ENCODE measurements at regions of chr18 and their contacts with region 1.

Region 1: DNA sequence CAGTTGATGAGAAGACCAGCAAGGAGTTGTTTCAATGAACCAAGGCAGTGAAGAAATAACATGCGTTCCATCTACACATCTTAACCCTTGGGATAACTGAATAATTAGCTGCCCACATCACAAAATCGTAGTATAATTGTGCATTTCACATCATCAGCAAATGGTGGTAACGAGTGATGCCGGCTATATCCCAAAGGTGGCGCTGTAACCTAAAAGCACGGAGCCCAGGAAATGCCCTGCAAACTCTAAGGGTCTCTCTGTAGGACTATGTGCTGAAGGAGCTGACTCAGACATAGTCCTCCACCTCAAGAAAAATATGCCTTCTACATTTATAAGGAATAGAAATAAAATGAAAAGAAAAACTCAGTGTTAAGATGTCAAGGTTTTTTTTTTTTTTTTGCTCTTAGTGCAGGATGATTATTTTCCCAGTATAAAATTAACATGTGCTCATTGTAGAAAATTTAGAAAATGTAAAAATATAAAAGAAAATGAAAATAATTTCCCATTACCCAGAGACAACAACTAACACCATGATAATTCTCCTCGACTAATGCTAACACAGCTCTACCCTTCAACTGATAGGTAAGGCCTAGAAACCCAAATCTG is 23.1 kb upstream of the DSG3 start:
- DNase-seq: peak; percentile 10
- ATAC-seq: peak; percentile 76; the same call in 2 of the 3 replicates
- H3K4me3 ChIP-seq: no peak overlapping the region
- H3K27ac ChIP-seq: no peak overlapping the region
- H3K4me1 ChIP-seq: peaks cover 8% of the 10 kb centered on the region; the same call in 1 of the 2 replicates
- H3K27me3 ChIP-seq: no peaks in the 10 kb centered on the region
- CTCF ChIP-seq: peak; percentile 81
- EP300 ChIP-seq: no peak
- POLR2A ChIP-seq: no peak
- RAD21 ChIP-seq: peak; percentile 52

Region 2: DNA sequence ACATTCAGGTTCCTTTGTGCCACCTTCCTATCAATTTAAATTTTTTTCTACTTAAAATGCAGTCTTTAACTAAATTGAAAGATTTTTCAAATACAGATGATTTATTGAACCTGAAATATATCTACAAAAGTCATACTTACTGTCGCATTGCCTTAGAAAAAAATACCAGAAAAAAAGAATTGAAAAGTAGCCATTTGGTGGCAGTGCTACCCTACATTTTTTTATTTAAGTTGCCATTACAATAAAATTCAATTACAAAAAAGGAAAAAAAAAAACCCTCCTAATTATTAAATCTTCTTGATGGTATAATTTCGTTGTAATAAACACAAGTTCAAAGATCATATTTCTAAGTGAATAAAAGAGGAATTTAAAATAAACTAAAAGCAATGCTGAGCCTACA is 425.3 kb before region 1 on chr18:
- CTCF ChIA-PET with region 1: no interaction called
- POLR2A ChIA-PET with region 1: no interaction called
- in situ Hi-C with region 1: no loop called
- intact Hi-C with region 1: loop called (anchors 10 kb)
- DNase-seq: no peak
- ATAC-seq: no peak
- H3K4me3 ChIP-seq: no peak overlapping the region
- H3K27ac ChIP-seq: no peak overlapping the region
- H3K4me1 ChIP-seq: no peaks in the 10 kb centered on the region
- H3K27me3 ChIP-seq: no peaks in the 10 kb centered on the region
- CTCF ChIP-seq: 0 out of 2 replicates have a peak, but pooled peaks have one; percentile 12
- EP300 ChIP-seq: no peak
- POLR2A ChIP-seq: no peak
- RAD21 ChIP-seq: no peak

Region 3: DNA sequence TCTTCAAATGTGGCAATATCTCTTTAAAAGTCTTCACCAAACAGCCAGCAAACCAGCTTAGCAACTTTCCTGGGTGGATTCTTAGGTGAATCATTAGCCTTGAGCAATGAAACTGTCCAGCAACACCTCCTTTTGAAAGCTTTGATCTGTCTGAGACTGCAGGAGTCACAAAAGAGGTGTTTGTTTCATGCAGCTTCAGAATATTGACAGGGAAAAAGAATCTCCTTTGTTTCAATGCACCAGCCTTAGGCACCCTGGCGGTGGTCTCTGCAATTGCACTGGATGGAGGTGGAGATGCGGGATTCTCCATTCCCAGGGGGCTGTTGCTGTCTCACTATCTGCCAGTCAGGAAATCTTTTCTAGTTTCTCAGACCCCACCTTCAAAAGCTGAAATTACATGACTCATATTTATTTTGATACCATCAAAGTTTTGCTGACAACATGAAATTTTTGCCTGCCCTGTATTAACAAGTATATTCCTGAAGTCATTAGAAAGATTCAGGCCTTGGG is 182.5 kb before region 1 on chr18:
- CTCF ChIA-PET with region 1: no interaction called
- POLR2A ChIA-PET with region 1: no interaction called
- in situ Hi-C with region 1: no loop called
- intact Hi-C with region 1: no loop called
- DNase-seq: peak; percentile 98
- ATAC-seq: peak; percentile 86
- H3K4me3 ChIP-seq: no peak overlapping the region
- H3K27ac ChIP-seq: peak overlapping the region; percentile 94
- H3K4me1 ChIP-seq: peaks cover 61% of the 10 kb centered on the region
- H3K27me3 ChIP-seq: no peaks in the 10 kb centered on the region
- CTCF ChIP-seq: peak; percentile 82
- EP300 ChIP-seq: peak; percentile 29 to 94; a peak in 2 of 4 replicates
- POLR2A ChIP-seq: no peak
- RAD21 ChIP-seq: peak; percentile 80

Region 4: DNA sequence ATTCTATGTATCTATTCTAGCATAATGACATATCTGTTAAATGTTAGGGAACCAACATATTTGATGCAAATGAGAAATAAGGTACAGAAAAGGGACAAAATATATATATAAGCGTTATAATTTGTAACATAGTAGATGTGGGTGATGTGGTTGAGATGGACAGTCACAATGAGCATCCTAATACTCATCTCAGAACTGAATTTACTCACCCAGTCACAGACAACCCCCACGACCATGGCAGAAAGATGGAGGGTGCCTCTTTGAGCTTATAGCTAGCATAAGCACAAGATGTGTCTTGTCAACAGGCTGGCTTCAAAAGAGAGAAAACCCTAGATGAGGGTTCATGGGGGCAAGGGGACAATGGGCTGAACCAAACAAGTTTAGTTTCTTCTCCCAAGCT is 13.9 kb after region 1 on chr18:
- CTCF ChIA-PET with region 1: no interaction called
- POLR2A ChIA-PET with region 1: no interaction called
- in situ Hi-C with region 1: no loop called
- intact Hi-C with region 1: no loop called
- DNase-seq: no peak
- ATAC-seq: no peak
- H3K4me3 ChIP-seq: no peak overlapping the region
- H3K27ac ChIP-seq: no peak overlapping the region
- H3K4me1 ChIP-seq: no peaks in the 10 kb centered on the region
- H3K27me3 ChIP-seq: peaks cover 0 to 9% of the 10 kb centered on the region in 2 experiments; a peak in 3 of 5 replicates
- CTCF ChIP-seq: no peak
- EP300 ChIP-seq: no peak
- POLR2A ChIP-seq: no peak
- RAD21 ChIP-seq: no peak

Region 5: GRCh38 chr18:31490387-31490786 is 65.9 kb after region 1 on chr18:
- CTCF ChIA-PET with region 1: no interaction called
- POLR2A ChIA-PET with region 1: no interaction called
- in situ Hi-C with region 1: no loop called
- intact Hi-C with region 1: no loop called
- DNase-seq: no peak
- ATAC-seq: no peak
- H3K4me3 ChIP-seq: no peak overlapping the region
- H3K27ac ChIP-seq: no peak overlapping the region
- H3K4me1 ChIP-seq: no peaks in the 10 kb centered on the region
- H3K27me3 ChIP-seq: peaks cover 0 to 17% of the 10 kb centered on the region in 2 experiments; a peak in 2 of 5 replicates
- CTCF ChIP-seq: no peak
- EP300 ChIP-seq: no peak
- POLR2A ChIP-seq: no peak
- RAD21 ChIP-seq: no peak

Region 6: DNA sequence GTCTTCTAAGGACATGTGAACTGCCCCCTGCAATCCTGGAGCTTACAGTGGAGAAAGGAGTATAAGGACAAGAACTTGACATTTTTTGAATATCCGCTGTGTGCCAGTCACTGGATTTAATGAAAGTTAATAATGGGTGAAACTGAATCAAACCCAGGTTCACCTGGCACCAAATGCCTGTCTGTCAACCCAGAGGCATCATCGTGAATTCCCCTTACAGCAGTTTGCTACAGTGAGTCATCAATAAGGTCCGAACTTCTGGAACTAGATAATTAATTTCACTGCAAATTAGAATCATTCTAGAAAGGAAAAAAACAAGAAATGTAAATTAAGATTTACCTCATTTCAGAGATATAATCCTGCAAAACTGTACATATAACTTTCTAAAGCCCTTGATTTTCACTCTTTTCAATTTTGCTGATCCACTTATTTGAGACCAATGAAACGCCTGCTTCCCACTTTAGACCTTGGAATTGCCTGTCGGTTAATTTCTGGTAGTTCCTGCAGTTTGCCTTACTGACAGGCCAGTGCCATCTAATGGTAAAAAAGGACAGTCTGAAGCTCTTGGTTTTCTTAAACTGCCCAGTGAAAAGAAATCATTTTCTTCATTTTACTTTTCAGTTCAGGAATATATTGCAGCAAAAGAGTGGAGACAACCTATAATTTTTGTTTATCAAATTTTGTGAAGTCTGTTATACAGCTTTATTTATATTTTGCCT is 81.7 kb after region 1 on chr18:
- CTCF ChIA-PET with region 1: no interaction called
- POLR2A ChIA-PET with region 1: no interaction called
- in situ Hi-C with region 1: no loop called
- intact Hi-C with region 1: loop called (anchors 1 kb)
- DNase-seq: peak; percentile 46
- ATAC-seq: peak; percentile 64
- H3K4me3 ChIP-seq: no peak overlapping the region
- H3K27ac ChIP-seq: no peak overlapping the region
- H3K4me1 ChIP-seq: peaks cover 32% of the 10 kb centered on the region
- H3K27me3 ChIP-seq: no peaks in the 10 kb centered on the region
- CTCF ChIP-seq: peak; percentile 52
- EP300 ChIP-seq: no peak
- POLR2A ChIP-seq: no peak
- RAD21 ChIP-seq: peak; percentile 51

Region 7: DNA sequence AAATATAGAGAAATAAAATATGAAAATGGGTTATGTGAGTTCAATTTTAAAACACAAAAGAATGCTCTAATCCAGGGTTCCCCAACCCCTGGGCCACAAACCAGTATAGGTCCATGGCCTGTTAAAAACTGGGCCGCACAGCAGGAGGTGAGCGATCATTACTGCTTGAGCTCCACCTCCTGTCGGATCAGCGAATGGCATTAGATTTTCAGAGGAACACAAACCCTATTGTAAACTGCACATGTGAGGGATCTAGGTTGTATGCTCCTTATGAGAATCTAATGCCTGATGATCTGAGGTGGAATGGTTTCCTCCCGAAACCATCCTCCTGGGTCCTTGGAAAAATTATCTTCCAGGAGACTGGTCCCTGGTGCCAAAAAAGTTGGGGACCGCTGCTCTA is 201.9 kb after region 1 on chr18:
- CTCF ChIA-PET with region 1: no interaction called
- POLR2A ChIA-PET with region 1: no interaction called
- in situ Hi-C with region 1: no loop called
- intact Hi-C with region 1: loop called (anchors 1 kb)
- DNase-seq: peak; percentile 30
- ATAC-seq: peak; percentile 84
- H3K4me3 ChIP-seq: no peak overlapping the region
- H3K27ac ChIP-seq: no peak overlapping the region
- H3K4me1 ChIP-seq: peaks cover 12% of the 10 kb centered on the region
- H3K27me3 ChIP-seq: no peaks in the 10 kb centered on the region
- CTCF ChIP-seq: peak; percentile 85
- EP300 ChIP-seq: no peak
- POLR2A ChIP-seq: no peak
- RAD21 ChIP-seq: peak; percentile 64; the same call in 1 of the 2 replicates

Region 8: DNA sequence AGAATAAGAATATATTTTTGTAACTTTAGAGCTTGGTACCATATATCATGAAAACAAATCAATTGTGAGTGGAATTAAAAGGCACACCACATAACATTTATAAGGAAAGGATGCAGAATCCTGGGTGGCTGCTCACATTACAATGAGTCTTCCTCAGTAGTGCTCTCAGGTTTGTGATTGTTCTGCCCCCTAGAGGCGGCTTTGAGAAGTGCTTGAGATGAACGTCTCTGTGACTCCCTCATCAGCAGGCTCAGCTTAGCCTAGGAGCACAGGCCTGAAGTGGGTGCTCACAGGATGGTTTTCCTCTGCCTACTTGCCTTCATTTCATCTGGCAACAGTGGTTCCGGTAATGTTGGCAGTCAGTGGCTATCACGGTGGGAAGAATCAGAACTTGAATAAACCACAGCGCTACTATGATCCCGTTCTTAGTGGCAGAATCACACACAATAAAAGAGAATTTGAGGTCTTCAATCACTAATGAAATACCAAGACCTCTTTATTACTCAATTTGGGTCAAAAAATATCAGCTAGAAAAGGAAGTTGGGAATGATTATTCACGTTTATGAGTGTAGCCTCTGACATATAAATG is 298.0 kb after region 1 on chr18:
- CTCF ChIA-PET with region 1: no interaction called
- POLR2A ChIA-PET with region 1: no interaction called
- in situ Hi-C with region 1: no loop called
- intact Hi-C with region 1: loop called (anchors 2 kb)
- DNase-seq: peak; percentile 69
- ATAC-seq: peak; percentile 96
- H3K4me3 ChIP-seq: no peak overlapping the region
- H3K27ac ChIP-seq: no peak overlapping the region
- H3K4me1 ChIP-seq: no peaks in the 10 kb centered on the region
- H3K27me3 ChIP-seq: peaks cover 0 to 18% of the 10 kb centered on the region in 2 experiments; a peak in 3 of 5 replicates
- CTCF ChIP-seq: peak; percentile 84
- EP300 ChIP-seq: no peak
- POLR2A ChIP-seq: no peak
- RAD21 ChIP-seq: no peak

Region 9: GRCh38 chr18:32081881-32082280 is 657.4 kb after region 1 on chr18:
- CTCF ChIA-PET with region 1: no interaction called
- POLR2A ChIA-PET with region 1: no interaction called
- in situ Hi-C with region 1: no loop called
- intact Hi-C with region 1: no loop called
- DNase-seq: no peak
- ATAC-seq: no peak
- H3K4me3 ChIP-seq: no peak overlapping the region
- H3K27ac ChIP-seq: no peak overlapping the region
- H3K4me1 ChIP-seq: no peaks in the 10 kb centered on the region
- H3K27me3 ChIP-seq: no peaks in the 10 kb centered on the region; a peak in 2 of 5 replicates
- CTCF ChIP-seq: no peak
- EP300 ChIP-seq: no peak
- POLR2A ChIP-seq: no peak
- RAD21 ChIP-seq: no peak